Tibial artery (tissue), 4 donors: ENCODE measurements at regions of chr3 and their contacts with region 1.

Region 1: GRCh38 chr3:37779289-37780152 is 82.2 kb upstream of the CTDSPL start:
- DNase-seq: no peak
- H3K4me3 ChIP-seq: no peak overlapping the region
- H3K27ac ChIP-seq: no peak overlapping the region
- H3K4me1 ChIP-seq: peaks cover 0 to 37% (median 9%) of the 10 kb centered on the region in 4 donors
- H3K27me3 ChIP-seq: no peaks in the 10 kb centered on the region
- CTCF ChIP-seq: peak; percentile 81 to 82

Region 2: DNA sequence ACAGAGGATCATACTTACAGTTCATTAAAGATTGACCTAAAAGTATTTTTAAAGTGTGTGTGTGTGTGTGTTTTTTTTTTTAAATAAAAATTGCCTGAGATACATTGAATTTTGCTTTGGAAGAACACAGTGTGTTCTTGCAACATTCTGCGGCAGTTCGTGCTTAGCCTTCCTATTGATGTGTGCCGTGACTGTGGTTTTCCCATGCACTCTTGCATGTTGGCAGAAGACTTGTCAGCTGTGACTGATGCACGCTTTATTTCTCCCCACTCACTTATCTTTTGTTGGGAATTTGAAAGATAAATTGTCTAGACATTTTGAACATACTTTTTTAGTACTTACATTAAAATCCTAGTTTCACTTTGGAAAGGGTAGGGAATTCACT is 468.9 kb before region 1 on chr3:
- intact Hi-C with region 1: loop called (anchors 5 kb)
- DNase-seq: peak in 1 of 2 donors; percentile 35
- H3K4me3 ChIP-seq: no peak overlapping the region
- H3K27ac ChIP-seq: no peak overlapping the region
- H3K4me1 ChIP-seq: peaks cover 0 to 9% (median 0%) of the 10 kb centered on the region in 4 donors
- H3K27me3 ChIP-seq: no peaks in the 10 kb centered on the region
- CTCF ChIP-seq: no peak

Region 3: DNA sequence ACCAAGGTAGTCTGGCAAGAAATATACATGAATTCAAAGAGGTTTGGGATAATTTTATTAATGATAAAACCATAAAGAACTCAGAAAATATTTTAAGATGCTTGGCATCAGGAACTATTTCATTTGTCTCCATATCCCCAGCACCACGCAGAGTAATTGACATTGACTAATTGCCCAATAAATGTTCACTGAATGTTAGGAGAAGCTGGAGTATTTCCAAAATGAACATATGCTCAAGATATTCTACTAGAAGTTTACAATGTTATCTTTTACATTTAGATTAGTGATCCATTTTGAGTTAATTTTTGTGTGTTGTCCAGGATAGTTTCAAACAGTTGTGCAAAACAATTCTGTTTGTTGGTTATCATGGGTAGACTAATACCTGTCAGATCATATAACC is 216.6 kb before region 1 on chr3:
- intact Hi-C with region 1: no loop called
- DNase-seq: no peak
- H3K4me3 ChIP-seq: no peak overlapping the region
- H3K27ac ChIP-seq: no peak overlapping the region
- H3K4me1 ChIP-seq: peaks cover 0 to 23% (median 16%) of the 10 kb centered on the region in 4 donors
- H3K27me3 ChIP-seq: no peaks in the 10 kb centered on the region
- CTCF ChIP-seq: no peak

Region 4: GRCh38 chr3:37924453-37924852 is 144.9 kb after region 1 on chr3:
- intact Hi-C with region 1: no loop called
- DNase-seq: no peak
- H3K4me3 ChIP-seq: no peak overlapping the region
- H3K27ac ChIP-seq: peak overlapping the region; percentile 69 to 85
- H3K4me1 ChIP-seq: peaks cover 0 to 83% (median 62%) of the 10 kb centered on the region in 4 donors
- H3K27me3 ChIP-seq: no peaks in the 10 kb centered on the region
- CTCF ChIP-seq: no peak

Region 5: DNA sequence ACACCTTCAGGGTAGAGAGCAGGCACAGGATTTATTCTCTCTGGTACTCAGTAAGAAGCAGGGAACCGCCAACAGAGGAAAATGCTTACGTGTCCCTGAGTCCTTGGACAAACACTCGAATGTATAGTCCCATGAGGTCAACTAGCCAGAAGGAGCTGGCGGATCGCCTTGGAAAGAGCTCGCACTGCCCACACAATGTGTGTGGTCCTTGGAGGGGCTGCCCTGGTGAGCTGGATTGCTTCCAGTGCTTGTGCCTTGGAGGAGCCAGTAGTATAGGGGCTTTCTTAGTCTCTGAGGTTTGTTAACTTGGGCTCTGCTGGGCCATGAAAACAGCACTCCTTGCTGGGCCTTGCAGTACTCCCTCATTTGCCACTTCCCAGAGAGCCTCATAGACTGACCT is 170.3 kb after region 1 on chr3:
- intact Hi-C with region 1: no loop called
- DNase-seq: no peak
- H3K4me3 ChIP-seq: no peak overlapping the region
- H3K27ac ChIP-seq: peak overlapping the region; percentile 73 to 75
- H3K4me1 ChIP-seq: peaks cover 0 to 61% (median 38%) of the 10 kb centered on the region in 4 donors
- H3K27me3 ChIP-seq: no peaks in the 10 kb centered on the region
- CTCF ChIP-seq: no peak